Activated T-helper 2 cell treated with anti-CD3 and anti-CD28 coated beads, Interferon-gamma antibody, Interleukin-2, Interleukin-4, amounts not matched to agents 10 μg/mL and 5 μg/mL and 100 μg/mL, durations not matched to agents 14 hours and 24 hours and 36 hours (primary cell): ENCODE measurements at regions of chr9 and their contacts with region 1.

Region 1: GRCh38 chr9:37302277-37302676 is 120.2 kb upstream of the GRHPR start:
- DNase-seq: peak; percentile 44
- H3K4me3 Mint-ChIP-seq: peak overlapping the region; percentile 52
- H3K27ac Mint-ChIP-seq: peak overlapping the region; percentile 86
- H3K4me1 Mint-ChIP-seq: peaks cover 49% of the 10 kb centered on the region
- H3K27me3 Mint-ChIP-seq: no peaks in the 10 kb centered on the region

Region 2: GRCh38 chr9:37209431-37210386 is 92.6 kb before region 1 on chr9:
- intact Hi-C with region 1: loop called (anchors 2 kb)
- DNase-seq: no peak
- H3K4me3 Mint-ChIP-seq: no peak overlapping the region
- H3K27ac Mint-ChIP-seq: peak overlapping the region; percentile 2
- H3K4me1 Mint-ChIP-seq: peaks cover 37% of the 10 kb centered on the region
- H3K27me3 Mint-ChIP-seq: no peaks in the 10 kb centered on the region